Esophagus muscularis mucosa (tissue), 4 donors: ENCODE measurements at regions of chr5 and their contacts with region 1.

Region 1: GRCh38 chr5:172868924-172869591 is 35.0 kb downstream of the ERGIC1 start:
- DNase-seq: peak; percentile 96
- H3K4me3 ChIP-seq: peak overlapping the region in 1 of 4 donors; percentile 29
- H3K27ac ChIP-seq: peak overlapping the region; percentile 95 to 97 (median 96)
- H3K4me1 ChIP-seq: peaks cover 88 to 99% (median 97%) of the 10 kb centered on the region in 4 donors
- H3K27me3 ChIP-seq: no peaks in the 10 kb centered on the region
- CTCF ChIP-seq: peak; percentile 45 to 57 (median 45)
- EP300 ChIP-seq: peak; percentile 99
- POLR2A ChIP-seq: no peak

Region 2: GRCh38 chr5:172714491-172715421 is 154.3 kb before region 1 on chr5:
- intact Hi-C with region 1: loop called (anchors 10 kb)
- DNase-seq: peak; percentile 95
- H3K4me3 ChIP-seq: no peak overlapping the region
- H3K27ac ChIP-seq: peak overlapping the region; percentile 67 to 75 (median 70)
- H3K4me1 ChIP-seq: peaks cover 39 to 57% (median 48%) of the 10 kb centered on the region in 4 donors
- H3K27me3 ChIP-seq: no peaks in the 10 kb centered on the region
- CTCF ChIP-seq: peak; percentile 77 to 97 (median 84)
- EP300 ChIP-seq: peak; percentile 29
- POLR2A ChIP-seq: no peak

Region 3: GRCh38 chr5:172770675-172771438 is 98.2 kb before region 1 on chr5 and contains the start of gene DUSP1:
- intact Hi-C with region 1: loop called (anchors 2 kb)
- DNase-seq: peak; percentile 100
- H3K4me3 ChIP-seq: peak within 1 kb of the TSS; percentile 88 to 98 (median 90)
- H3K27ac ChIP-seq: peak within 1 kb of the TSS; percentile 99 to 100 (median 100)
- H3K4me1 ChIP-seq: peaks cover 31 to 69% (median 57%) of the 10 kb centered on the region in 4 donors
- H3K27me3 ChIP-seq: peaks cover 0 to 8% (median 0%) of the 10 kb centered on the region in 4 donors
- CTCF ChIP-seq: peak in 2 of 3 experiments; percentile 21 to 42
- EP300 ChIP-seq: peak; percentile 79
- POLR2A ChIP-seq: peak; percentile 100
- total RNA-seq, gene DUSP1: 455 to 718 (median 676) TPM

Region 4: GRCh38 chr5:172854451-172854871 is 14.6 kb before region 1 on chr5:
- intact Hi-C with region 1: no loop called
- DNase-seq: no peak
- H3K4me3 ChIP-seq: no peak overlapping the region
- H3K27ac ChIP-seq: peak overlapping the region; percentile 84 to 90 (median 87)
- H3K4me1 ChIP-seq: peaks cover 74 to 86% (median 81%) of the 10 kb centered on the region in 4 donors
- H3K27me3 ChIP-seq: no peaks in the 10 kb centered on the region
- CTCF ChIP-seq: no peak
- EP300 ChIP-seq: no peak
- POLR2A ChIP-seq: no peak

Region 5: DNA sequence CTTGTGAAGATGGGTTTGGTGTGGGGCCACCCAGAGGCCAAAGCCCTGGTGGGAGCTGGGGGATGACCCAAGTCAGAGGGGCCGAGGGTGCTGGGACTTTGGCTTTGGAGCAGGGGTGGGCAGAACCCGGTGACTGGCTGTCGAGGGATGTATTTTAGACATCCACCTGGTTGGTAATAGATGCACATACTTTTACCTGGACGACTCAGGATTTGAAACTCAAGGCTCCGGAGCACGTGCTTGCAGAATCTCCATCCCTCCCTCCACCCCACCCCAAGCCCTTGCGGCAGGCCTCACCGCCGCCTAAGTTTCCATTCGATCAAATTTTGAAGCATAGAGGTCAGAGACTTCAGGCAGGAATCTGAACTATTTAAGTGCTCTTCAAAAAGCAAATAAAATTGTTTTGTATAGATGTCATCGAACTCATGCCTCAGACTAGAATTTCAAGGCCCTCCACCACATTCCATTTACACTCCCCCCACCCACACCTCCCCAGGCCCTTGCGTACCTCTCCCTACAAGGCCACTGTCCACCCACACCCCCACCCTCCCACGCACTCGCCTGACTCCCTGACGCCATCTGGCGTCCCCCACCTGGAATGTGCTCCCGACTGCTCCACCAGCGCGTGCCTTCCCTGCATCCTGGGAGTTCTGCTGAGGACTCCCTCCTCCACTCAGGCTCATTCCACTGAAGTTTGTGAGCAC is 33.6 kb after region 1 on chr5:
- intact Hi-C with region 1: loop called (anchors 2 kb)
- DNase-seq: peak; percentile 97
- H3K4me3 ChIP-seq: no peak overlapping the region
- H3K27ac ChIP-seq: peak overlapping the region; percentile 90 to 99 (median 96)
- H3K4me1 ChIP-seq: peaks cover 70 to 96% (median 91%) of the 10 kb centered on the region in 4 donors
- H3K27me3 ChIP-seq: no peaks in the 10 kb centered on the region
- CTCF ChIP-seq: peak; percentile 51 to 56 (median 53)
- EP300 ChIP-seq: peak; percentile 94
- POLR2A ChIP-seq: no peak

Region 6: DNA sequence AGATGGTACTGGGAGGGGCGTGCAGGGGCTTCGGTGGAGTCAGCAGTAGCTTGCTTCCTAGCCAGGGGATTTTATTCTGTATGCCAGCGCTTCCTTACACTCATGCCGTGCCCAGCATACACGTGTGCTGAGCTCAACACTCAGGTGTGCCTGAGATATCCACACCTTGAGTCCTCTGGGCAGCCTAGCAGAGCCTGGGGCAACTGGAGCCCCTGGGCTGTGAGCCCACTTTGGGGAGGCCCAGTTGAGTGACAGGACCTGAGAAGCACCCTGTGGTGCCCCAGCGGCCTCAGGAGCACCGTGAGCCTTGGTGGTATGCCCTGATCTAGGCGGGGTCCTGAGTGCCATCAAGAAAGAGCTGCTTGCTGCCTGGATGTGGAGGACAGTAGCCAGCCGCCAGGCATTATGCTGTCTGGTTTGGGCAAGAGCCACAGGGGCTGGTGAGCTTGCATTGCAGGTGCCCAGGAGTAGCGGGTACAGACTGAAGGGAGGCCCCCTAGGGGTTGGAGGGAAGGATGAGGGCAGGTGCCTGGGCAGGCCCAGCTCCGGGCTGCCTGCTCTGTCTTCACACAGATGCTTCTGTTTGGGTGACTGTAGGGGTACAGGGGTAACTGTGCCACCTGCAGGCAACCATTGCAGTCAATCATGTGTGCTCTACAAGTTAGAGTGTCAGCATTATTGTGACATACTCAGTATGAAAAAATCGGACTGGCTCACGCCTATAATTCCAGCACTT is 318.2 kb after region 1 on chr5:
- intact Hi-C with region 1: no loop called
- DNase-seq: no peak
- H3K4me3 ChIP-seq: no peak overlapping the region
- H3K27ac ChIP-seq: no peak overlapping the region
- H3K4me1 ChIP-seq: no peaks in the 10 kb centered on the region
- H3K27me3 ChIP-seq: peaks cover 0 to 8% (median 0%) of the 10 kb centered on the region in 4 donors
- CTCF ChIP-seq: no peak
- EP300 ChIP-seq: no peak
- POLR2A ChIP-seq: no peak